Activated CD4-positive, alpha-beta memory T cell treated with anti-CD3 and anti-CD28 coated beads for 36 hours (primary cell): ENCODE measurements at regions of chr4 and their contacts with region 1.

Region 1: DNA sequence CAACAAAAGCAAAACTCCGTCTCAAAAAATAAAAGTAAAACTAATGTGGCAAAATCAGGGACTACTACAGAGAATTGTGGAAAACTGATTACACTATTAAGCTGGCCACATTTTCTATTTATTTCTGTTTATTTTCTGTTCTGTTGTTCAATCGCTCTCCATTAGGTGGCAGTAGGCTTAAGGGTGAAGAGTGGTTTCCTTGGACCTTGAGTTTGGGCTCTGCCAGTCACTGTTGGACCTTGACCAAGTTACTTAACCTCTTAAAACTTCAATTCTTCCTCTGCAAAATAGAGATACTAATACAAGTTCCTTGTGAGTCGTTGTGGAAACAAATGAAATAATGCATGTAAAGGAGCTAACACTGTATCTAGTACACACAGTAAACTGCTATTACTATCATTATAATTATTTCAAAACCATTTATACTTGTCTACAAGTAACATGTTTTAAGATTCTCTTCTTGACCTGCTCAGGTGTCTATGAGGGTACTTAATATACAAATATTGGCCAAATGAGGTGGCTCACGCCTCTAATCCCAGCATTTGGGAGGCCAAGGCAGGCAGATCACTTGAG is 15.2 kb downstream of the HSD17B11 start:
- DNase-seq: no peak
- H3K4me3 Mint-ChIP-seq: no peak overlapping the region
- H3K27ac Mint-ChIP-seq: no peak overlapping the region
- H3K4me1 Mint-ChIP-seq: no peaks in the 10 kb centered on the region
- H3K27me3 Mint-ChIP-seq: no peaks in the 10 kb centered on the region

Region 2: DNA sequence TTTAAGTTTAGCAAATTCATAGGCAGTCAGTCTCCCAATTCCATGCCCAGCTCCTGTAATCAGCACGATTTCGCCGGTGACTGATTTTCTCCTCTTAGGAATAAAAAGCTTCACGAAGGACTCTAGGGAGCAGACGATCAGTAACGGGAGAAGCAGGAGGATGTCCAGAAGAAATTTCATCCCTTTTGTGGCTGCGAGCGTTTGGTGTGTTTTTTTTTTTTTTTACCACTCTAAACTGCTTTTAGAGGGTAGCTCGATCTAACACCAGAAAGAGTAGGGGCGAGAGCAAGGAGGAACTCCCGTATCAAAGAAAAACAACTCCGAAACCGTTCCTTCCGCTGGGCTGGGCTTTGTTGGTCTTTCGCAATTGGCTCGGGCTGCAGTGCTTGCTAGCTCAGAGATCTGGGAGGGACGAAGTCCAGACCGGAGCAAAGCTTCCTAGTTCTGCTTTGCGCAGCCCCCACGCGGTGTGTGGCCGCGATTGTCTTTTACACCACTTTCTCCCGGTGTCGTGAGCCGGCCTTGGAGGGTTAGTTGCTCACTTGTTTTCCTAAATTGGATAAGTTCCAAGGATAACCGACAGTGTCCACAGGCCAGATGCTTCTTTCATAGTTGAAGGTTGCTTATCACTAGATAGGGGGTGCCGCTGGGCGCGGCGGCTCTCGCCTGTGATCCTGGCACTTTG is 15.2 kb after region 1 on chr4 and contains the start of gene HSD17B11:
- CTCF ChIA-PET with region 1: interaction called, 25 read pairs
- POLR2A ChIA-PET with region 1: interaction called, 4 read pairs
- intact Hi-C with region 1: no loop called
- DNase-seq: peak; percentile 89
- H3K4me3 Mint-ChIP-seq: peak within 1 kb of the TSS; percentile 90
- H3K27ac Mint-ChIP-seq: peak within 1 kb of the TSS; percentile 78
- H3K4me1 Mint-ChIP-seq: peaks cover 31% of the 10 kb centered on the region
- H3K27me3 Mint-ChIP-seq: no peaks in the 10 kb centered on the region
- total RNA-seq, gene HSD17B11: 19.8 to 20.8 TPM